ENCODE measurements at regions of chr15 and their contacts with region 1.

Region 1: DNA sequence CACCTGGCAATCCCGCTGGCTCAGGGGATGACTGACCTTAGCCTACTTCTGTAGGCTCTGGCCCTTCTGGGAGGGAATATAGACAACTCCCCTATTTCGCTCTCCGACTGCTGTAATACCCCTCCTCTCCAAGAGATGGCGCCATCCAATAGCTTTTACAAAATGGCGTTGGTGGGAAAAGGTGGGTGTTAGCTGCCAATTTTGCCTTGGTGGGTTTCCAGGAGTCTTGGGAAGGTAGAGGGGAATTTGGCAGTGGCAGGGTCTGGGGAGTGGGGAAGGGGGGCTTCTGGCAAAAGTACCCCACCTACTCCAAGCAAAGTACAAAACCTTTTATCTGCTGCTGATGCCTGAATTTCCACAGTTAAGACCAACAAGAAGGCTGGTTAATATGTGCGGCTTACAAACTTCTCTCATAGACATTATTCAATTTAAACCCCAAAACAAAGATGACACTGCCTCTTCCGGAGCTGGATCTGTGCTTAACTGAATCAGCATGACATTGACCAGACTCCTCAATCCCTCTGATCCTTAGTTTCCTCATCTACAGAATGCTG is 62.1 kb downstream of the RASGRF1 start:
- DNase-seq: peak in 1 of 3 donors; percentile 54
- ATAC-seq: peak; percentile 52 to 80 (median 66)
- H3K4me3 ChIP-seq: no peak overlapping the region
- H3K27ac ChIP-seq: no peak overlapping the region
- H3K4me1 ChIP-seq: no peaks in the 10 kb centered on the region
- H3K27me3 ChIP-seq: no peaks in the 10 kb centered on the region
- CTCF ChIP-seq: peak; percentile 70 to 86 (median 80)
- POLR2A ChIP-seq: no peak

Region 2: GRCh38 chr15:78859971-78860732 is 168.3 kb before region 1 on chr15:
- intact Hi-C with region 1: no loop called
- DNase-seq: peak; percentile 72 to 79 (median 75)
- ATAC-seq: peak; percentile 86 to 96 (median 94)
- H3K4me3 ChIP-seq: peak overlapping the region; percentile 25 to 60 (median 50)
- H3K27ac ChIP-seq: no peak overlapping the region
- H3K4me1 ChIP-seq: no peaks in the 10 kb centered on the region
- H3K27me3 ChIP-seq: no peaks in the 10 kb centered on the region
- CTCF ChIP-seq: peak; percentile 48 to 54 (median 53)
- POLR2A ChIP-seq: no peak

Region 3: GRCh38 chr15:79089890-79090486 is 61.5 kb after region 1 on chr15:
- intact Hi-C with region 1: no loop called
- DNase-seq: peak in 1 of 3 donors; percentile 29
- ATAC-seq: no peak
- H3K4me3 ChIP-seq: no peak overlapping the region
- H3K27ac ChIP-seq: no peak overlapping the region
- H3K4me1 ChIP-seq: peaks cover 0 to 16% (median 0%) of the 10 kb centered on the region in 4 donors
- H3K27me3 ChIP-seq: peaks cover 0 to 18% of the 10 kb centered on the region in 2 donors
- CTCF ChIP-seq: no peak
- POLR2A ChIP-seq: no peak

Region 4: DNA sequence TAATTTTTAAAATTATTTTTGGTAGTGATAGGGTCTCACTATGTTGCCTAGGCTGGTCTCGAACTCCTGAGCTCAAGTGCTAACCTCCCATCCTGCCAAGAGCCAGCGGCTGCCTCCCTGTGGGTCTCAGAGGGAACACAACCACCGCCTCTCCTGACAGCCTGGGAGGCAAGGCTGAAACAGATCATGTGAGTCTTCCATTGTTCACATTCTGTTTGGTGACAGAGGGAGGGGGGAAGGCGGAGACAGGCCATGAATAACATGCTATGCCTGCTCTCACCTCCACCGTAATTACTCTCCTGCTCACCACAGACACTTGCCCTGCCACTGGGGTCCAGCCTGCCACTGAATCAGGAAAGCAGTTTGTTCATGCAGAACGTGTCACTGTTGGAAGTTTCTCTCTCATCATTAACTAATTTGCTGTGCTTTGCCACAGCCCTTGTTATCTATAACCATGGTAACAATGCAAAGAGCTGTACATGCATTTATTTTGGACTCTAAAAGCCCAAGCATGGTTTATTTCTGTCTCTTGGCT is 140.5 kb after region 1 on chr15:
- intact Hi-C with region 1: no loop called
- DNase-seq: no peak
- ATAC-seq: no peak
- H3K4me3 ChIP-seq: no peak overlapping the region
- H3K27ac ChIP-seq: no peak overlapping the region
- H3K4me1 ChIP-seq: peaks cover 0 to 5% (median 0%) of the 10 kb centered on the region in 4 donors
- H3K27me3 ChIP-seq: no peaks in the 10 kb centered on the region
- CTCF ChIP-seq: no peak
- POLR2A ChIP-seq: no peak

Region 5: DNA sequence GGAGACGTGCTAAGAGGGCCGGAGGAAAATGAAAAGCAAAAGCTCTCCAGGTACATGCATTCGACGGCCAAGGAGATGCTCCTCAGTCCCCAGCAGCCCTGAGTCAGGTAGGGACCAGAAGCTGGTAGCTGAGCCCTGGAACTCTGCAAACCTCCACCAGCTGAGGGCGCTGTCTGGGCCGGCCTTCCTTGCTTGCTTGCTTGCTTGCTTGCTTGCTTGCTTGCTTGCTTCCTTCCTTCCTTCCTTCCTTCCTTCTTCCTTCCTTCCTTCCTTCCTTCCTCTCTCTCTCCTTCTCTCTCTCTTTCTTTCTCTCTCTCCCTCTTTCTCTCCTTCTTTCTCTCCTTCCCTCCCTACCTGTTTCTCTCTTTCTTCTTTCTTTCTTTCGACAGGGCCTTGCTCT is 156.7 kb after region 1 on chr15:
- intact Hi-C with region 1: loop called (anchors 5 kb)
- DNase-seq: no peak
- ATAC-seq: no peak
- H3K4me3 ChIP-seq: no peak overlapping the region
- H3K27ac ChIP-seq: no peak overlapping the region
- H3K4me1 ChIP-seq: no peaks in the 10 kb centered on the region
- H3K27me3 ChIP-seq: no peaks in the 10 kb centered on the region
- CTCF ChIP-seq: no peak
- POLR2A ChIP-seq: no peak